ENCODE measurements at regions of chr12 and their contacts with region 1.

Region 1: DNA sequence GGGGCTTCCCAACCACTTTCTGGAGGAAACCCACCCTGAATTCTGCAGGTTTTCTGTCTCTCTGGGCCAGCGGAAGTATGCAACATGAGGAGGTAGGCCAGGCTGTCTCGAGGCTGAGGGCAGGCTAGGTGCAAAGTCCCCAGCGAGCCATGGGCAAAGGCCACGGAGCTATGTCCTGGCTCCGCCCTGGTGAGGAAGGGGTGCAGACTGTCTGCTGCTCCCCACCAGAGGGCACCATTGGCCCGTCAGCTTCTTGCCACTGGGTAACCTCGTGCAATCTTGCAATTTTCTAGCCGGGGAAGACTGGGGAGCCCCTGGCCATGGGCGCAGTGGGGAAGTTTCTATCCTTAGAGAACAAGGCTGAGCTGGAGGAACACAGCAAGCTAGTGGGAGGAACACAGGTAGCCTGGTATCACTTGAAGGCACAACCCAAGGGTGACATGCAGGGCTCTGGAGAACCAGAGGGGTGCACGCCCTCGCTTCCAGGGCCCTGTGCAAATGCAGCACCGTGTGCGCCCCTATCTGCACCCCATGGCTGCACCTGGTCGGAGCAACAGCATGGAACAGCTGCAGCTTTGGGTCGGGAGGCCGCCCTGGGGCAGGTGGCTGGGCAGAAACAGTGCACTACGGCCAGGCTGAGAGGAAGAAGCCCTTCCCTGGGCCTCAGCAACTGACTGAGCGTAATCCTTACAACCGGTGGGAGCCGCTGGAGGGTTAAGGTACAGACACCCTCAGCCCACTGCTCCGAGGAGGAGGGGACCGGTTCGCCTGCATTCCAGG is 27.6 kb upstream of the RPLP0 start:
- DNase-seq: no peak
- H3K4me3 ChIP-seq: peak overlapping the region; percentile 4; the same call in 1 of the 2 replicates
- CTCF ChIP-seq: peak; percentile 94

Region 2: DNA sequence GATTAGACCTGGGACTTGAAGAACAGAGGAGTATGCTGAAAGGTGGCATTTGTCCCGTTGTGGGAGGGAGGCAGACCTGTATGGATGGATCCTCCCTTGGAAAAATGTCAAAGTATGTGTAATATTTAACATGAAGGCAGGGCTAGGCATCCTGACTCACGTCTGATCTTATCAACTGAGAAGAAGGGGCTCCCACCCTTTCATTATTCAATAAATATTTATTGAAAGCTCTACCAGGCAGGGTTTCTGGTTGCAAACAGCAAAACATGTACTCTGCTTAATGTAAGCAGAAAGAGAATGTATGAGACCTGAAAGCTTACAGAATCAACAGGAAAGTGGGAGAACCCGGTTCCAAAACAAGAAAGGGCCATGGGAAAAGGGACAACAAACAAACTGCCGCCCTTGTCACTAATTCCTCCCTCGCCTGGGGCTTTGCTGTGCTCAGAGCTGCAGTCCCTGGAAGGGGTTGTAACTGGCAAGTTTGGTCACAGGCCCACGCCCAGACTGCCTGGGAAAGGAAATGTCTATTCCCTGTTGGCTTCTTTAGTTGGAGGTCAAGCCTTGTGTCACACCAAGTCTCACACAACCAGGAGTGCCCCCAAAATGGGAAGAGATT is 149.0 kb before region 1 on chr12:
- CTCF ChIA-PET with region 1: no interaction called
- POLR2A ChIA-PET with region 1: no interaction called
- DNase-seq: no peak
- H3K4me3 ChIP-seq: no peak overlapping the region
- CTCF ChIP-seq: no peak

Region 3: GRCh38 chr12:120200364-120200800 is 28.1 kb before region 1 on chr12:
- CTCF ChIA-PET with region 1: interaction called, 280 read pairs
- POLR2A ChIA-PET with region 1: interaction called, 122 read pairs
- DNase-seq: no peak
- H3K4me3 ChIP-seq: peak overlapping the region; percentile 89
- CTCF ChIP-seq: no peak

Region 4: DNA sequence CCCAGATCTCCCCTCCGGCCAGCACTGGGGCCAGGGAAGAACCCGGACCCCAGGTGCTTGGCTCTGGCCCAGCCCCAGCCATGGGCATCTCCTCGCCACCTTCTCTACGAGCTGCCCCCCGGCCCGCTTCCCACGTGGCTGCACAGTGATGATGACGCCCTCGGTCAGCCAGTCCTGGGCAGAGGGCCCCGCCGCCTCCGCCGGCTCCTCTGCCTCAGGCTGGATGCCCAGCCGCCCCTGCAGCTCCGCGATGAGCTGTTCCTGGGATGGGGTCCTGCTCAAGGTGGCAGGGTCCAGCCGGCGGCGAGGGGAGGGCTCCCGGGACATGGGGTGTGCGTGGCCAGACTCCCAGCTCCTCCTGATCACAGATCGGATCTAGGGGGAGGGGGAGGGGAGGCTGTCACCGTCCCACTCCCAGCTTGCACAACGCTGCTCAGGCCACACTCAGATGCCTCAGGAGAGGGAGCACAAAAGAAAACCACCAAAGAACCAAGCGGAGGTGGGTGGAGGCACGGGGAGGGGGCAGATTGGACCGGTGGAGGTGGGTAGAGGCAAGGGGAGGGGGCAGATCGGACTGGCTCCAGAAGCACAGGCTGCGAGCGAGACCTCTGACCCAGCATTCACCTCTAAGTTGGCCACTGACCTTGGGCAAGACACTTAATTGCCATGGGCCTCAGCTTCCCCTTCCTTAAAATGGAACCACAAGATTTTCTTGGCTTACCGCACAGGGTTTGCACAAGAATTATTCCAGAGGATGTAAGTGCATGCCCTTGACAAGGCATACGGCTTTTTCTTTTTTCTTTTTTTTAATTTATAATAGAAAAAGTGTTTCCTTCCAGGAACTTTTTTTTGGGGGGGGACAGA is 11.5 kb before region 1 on chr12:
- CTCF ChIA-PET with region 1: interaction called, 82 read pairs
- POLR2A ChIA-PET with region 1: interaction called, 5 read pairs
- DNase-seq: no peak
- H3K4me3 ChIP-seq: no peak overlapping the region
- CTCF ChIP-seq: no peak

Region 5: DNA sequence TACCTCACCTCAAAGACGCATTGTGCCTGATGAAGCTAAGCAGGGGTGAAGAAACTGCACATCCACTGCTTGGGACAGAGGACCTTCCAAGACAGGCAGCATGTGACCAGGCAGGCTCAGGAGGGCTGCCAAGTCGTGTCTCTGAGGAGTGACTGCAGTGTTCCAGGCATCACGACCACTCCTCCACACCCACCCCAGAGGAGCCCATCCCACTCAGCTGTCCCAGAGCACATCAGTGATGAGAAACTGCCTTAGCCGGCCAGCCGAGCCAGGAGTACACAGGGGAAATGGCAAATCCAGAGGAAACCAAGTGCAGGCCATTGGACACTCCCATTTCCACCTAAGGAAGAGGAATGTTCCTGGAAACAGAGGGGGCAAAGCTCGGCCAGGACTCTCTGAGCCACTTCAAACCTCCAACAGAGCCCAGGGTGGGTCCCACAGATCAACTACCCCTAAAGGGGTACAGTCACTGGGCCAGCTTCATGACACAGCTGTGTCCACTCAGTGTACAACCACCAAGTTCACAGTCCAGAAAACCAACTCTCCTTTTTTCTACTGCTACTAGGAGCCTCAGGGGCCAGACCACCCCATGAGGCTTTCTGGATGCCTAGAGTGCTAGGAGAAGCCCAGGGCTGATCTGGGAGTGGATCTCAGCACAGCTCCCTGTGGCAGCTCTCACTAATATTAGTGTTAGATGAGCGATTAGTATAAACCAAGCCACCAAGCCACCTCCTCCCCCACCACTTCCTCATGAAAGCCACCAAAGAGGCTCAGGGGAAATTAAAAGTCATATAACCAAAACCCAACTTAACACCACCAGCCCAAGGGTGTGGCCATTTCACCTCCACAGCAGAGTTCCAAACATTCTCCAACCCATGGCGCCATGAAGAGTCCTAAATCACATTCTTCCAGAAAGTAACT is 21.7 kb after region 1 on chr12:
- CTCF ChIA-PET with region 1: interaction called, 1,066 read pairs
- POLR2A ChIA-PET with region 1: interaction called, 50 read pairs
- DNase-seq: no peak
- H3K4me3 ChIP-seq: no peak overlapping the region
- CTCF ChIP-seq: no peak

Region 6: GRCh38 chr12:120265473-120266179 is 37.1 kb after region 1 on chr12 and contains the start of gene PXN:
- CTCF ChIA-PET with region 1: interaction called, 1,066 read pairs
- POLR2A ChIA-PET with region 1: interaction called, 98 read pairs
- DNase-seq: no peak
- H3K4me3 ChIP-seq: peak within 1 kb of the TSS; percentile 81
- CTCF ChIP-seq: peak; percentile 88

Region 7: GRCh38 chr12:120292661-120293531 is 64.4 kb after region 1 on chr12 and contains the start of gene RNU4-1:
- CTCF ChIA-PET with region 1: interaction called, 175 read pairs
- POLR2A ChIA-PET with region 1: interaction called, 249 read pairs
- DNase-seq: peak; percentile 79
- H3K4me3 ChIP-seq: peak within 1 kb of the TSS; percentile 61
- CTCF ChIP-seq: no peak

Region 8: GRCh38 chr12:120356567-120357030 is 128.1 kb after region 1 on chr12:
- CTCF ChIA-PET with region 1: no interaction called
- POLR2A ChIA-PET with region 1: no interaction called
- DNase-seq: peak; percentile 42
- H3K4me3 ChIP-seq: no peak overlapping the region
- CTCF ChIP-seq: peak; percentile 83

Measured in AG04449 (cell line).